Psoas muscle (tissue), 8 donors: ENCODE measurements at regions of chr9 and their contacts with region 1.

Region 1: DNA sequence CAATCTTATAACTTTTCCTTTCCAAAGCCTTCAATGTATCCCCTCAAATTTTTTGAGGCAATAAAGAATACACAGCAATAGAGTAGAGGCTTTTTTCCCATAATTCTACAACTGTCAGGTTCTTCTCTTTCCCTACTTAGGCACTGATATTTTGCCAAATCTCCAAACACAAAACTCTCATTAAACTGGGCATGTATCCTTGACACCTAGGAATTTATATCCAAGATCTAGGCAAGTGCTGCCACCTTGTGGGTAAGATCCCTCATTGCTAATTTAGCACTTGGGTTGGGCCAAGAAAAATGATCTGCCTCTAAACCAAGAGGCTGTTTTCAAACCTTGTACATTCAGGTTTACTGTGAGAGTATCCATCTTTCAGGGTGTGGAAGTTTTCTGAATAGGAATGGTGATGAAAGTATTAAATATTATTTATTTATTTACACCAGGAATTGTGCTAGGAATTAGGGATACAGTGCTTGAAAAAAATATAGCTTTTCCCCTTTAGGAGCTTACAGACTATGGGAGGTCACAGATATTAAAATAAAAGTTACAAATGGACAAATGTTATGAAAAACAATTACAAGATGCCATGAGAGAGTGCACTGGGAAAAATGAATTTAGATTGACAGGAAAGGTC is 17.6 kb downstream of the TSTD2 start:
- DNase-seq: no peak
- ATAC-seq: peak; percentile 67 to 90 (median 78)
- H3K4me3 ChIP-seq: no peak overlapping the region
- H3K27ac ChIP-seq: peak overlapping the region; percentile 18
- H3K4me1 ChIP-seq: peaks cover 14% of the 10 kb centered on the region
- H3K27me3 ChIP-seq: no peaks in the 10 kb centered on the region
- CTCF ChIP-seq: peak; percentile 91

Region 2: GRCh38 chr9:97406620-97407177 is 208.9 kb before region 1 on chr9:
- intact Hi-C with region 1: loop called (anchors 5 to 10 kb)
- DNase-seq: no peak
- ATAC-seq: no peak
- H3K4me3 ChIP-seq: no peak overlapping the region
- H3K27ac ChIP-seq: no peak overlapping the region
- H3K4me1 ChIP-seq: no peaks in the 10 kb centered on the region
- H3K27me3 ChIP-seq: peaks cover 0 to 3% (median 2%) of the 10 kb centered on the region in 3 donors
- CTCF ChIP-seq: no peak

Region 3: GRCh38 chr9:97475059-97475458 is 140.5 kb before region 1 on chr9:
- intact Hi-C with region 1: no loop called
- DNase-seq: no peak
- ATAC-seq: no peak
- H3K4me3 ChIP-seq: no peak overlapping the region
- H3K27ac ChIP-seq: no peak overlapping the region
- H3K4me1 ChIP-seq: peaks cover 9% of the 10 kb centered on the region
- H3K27me3 ChIP-seq: no peaks in the 10 kb centered on the region
- CTCF ChIP-seq: no peak

Region 4: GRCh38 chr9:97744710-97745701 is 129.4 kb after region 1 on chr9:
- intact Hi-C with region 1: no loop called
- DNase-seq: no peak
- ATAC-seq: no peak
- H3K4me3 ChIP-seq: no peak overlapping the region
- H3K27ac ChIP-seq: no peak overlapping the region
- H3K4me1 ChIP-seq: peaks cover 8% of the 10 kb centered on the region
- H3K27me3 ChIP-seq: peaks cover 0 to 17% (median 0%) of the 10 kb centered on the region in 3 donors
- CTCF ChIP-seq: no peak

Region 5: DNA sequence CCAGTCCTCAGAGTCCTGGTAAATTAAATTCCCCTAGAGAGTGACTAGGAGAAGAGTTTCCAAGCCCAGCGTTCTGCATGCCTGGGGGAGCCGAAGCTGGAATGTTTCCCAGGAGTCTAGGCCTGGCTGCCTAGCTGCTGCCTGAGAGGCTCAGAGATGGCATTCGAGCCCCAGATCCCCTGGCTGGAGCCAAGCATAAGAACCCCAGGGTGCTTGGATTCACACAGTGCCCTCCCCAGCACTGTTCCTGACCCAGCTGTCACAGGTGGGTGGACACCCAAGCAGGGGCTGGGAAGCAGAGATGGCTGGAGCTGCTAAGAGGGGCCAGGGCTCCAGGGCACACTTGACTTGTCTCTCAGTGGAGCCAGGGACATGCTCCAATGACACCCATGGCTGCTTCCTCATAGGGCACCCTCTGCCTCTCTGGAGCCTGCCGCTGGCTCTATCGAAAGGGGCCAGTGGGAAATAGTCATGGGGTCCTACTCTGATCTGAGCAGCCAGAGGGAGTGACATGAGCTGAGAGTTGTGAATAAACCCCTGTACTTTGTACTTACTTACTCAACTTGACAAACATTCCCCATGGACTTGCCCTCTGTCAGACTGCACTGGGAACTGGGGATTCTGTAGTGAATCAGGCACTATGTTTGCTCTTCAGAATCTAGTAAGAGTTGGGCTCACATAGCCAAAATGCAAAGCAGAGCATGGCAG is 144.2 kb after region 1 on chr9:
- intact Hi-C with region 1: no loop called
- DNase-seq: no peak
- ATAC-seq: no peak
- H3K4me3 ChIP-seq: no peak overlapping the region
- H3K27ac ChIP-seq: no peak overlapping the region
- H3K4me1 ChIP-seq: no peaks in the 10 kb centered on the region
- H3K27me3 ChIP-seq: peaks cover 0 to 24% (median 0%) of the 10 kb centered on the region in 3 donors
- CTCF ChIP-seq: no peak